ENCODE measurements at regions of chr11 and their contacts with region 1.

Region 1: GRCh38 chr11:78715639-78716311 is 141.1 kb upstream of the NARS2 start:
- DNase-seq: peak; percentile 85 to 88
- H3K4me3 ChIP-seq: no peak overlapping the region
- H3K4me3 Mint-ChIP-seq: no peak overlapping the region
- H3K27ac Mint-ChIP-seq: no peak overlapping the region
- H3K4me1 ChIP-seq: no peaks in the 10 kb centered on the region
- H3K4me1 Mint-ChIP-seq: no peaks in the 10 kb centered on the region
- H3K27me3 ChIP-seq: no peaks in the 10 kb centered on the region; the same call in 1 of the 2 replicates
- H3K27me3 Mint-ChIP-seq: peaks cover 16% of the 10 kb centered on the region
- CTCF ChIP-seq: peak; percentile 98 to 99

Region 2: DNA sequence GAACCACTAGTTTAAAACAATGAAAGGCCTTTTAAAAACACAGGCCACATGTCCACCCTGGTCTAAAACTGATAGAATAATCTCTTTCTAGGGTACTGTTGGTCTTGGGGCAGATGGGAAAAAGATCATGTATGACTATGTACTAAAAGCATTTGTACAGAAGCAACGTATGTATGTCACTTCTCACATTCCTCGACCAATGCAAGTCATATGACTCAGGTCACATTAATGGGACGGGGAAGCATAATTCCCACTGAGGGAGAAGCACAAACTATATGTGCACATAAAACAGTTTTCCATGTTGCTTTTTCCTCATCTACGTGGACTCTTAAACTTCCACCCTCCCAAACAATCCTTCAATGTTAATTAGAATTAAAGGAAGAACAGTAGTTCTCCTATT is 265.9 kb before region 1 on chr11:
- CTCF ChIA-PET with region 1: no interaction called
- POLR2A ChIA-PET with region 1: no interaction called
- intact Hi-C with region 1: no loop called
- DNase-seq: no peak
- H3K4me3 ChIP-seq: no peak overlapping the region
- H3K4me3 Mint-ChIP-seq: no peak overlapping the region
- H3K27ac Mint-ChIP-seq: no peak overlapping the region
- H3K4me1 ChIP-seq: peaks cover 4% of the 10 kb centered on the region; the same call in 1 of the 2 replicates
- H3K4me1 Mint-ChIP-seq: peaks cover 11% of the 10 kb centered on the region
- H3K27me3 ChIP-seq: no peaks in the 10 kb centered on the region
- H3K27me3 Mint-ChIP-seq: no peaks in the 10 kb centered on the region
- CTCF ChIP-seq: no peak

Region 3: DNA sequence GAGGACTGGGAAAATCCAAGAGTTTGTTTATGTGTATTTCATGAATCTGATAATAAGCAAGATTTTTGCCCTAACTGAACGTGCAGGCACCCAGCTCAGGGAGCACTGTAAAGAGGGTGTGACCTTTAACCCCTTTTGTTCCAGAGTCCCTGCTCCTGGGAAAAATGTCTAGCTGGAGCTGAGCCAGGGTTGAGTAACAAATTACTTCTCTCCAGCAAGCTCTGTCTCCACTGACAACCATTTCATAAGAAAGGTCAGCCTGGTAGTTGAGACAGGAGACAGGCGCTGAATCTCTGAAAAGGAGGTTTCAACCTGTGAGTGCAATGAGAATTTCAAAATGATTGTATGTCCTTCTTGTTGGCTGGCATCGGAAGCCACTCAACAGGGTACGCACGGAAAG is 15.3 kb after region 1 on chr11:
- CTCF ChIA-PET with region 1: interaction called, 10 read pairs
- POLR2A ChIA-PET with region 1: no interaction called
- intact Hi-C with region 1: no loop called
- DNase-seq: no peak
- H3K4me3 ChIP-seq: no peak overlapping the region
- H3K4me3 Mint-ChIP-seq: no peak overlapping the region
- H3K27ac Mint-ChIP-seq: no peak overlapping the region
- H3K4me1 ChIP-seq: no peaks in the 10 kb centered on the region
- H3K4me1 Mint-ChIP-seq: no peaks in the 10 kb centered on the region
- H3K27me3 ChIP-seq: no peaks in the 10 kb centered on the region
- H3K27me3 Mint-ChIP-seq: peaks cover 4% of the 10 kb centered on the region
- CTCF ChIP-seq: no peak

Region 4: GRCh38 chr11:78812513-78813293 is 96.9 kb after region 1 on chr11:
- CTCF ChIA-PET with region 1: interaction called, 4 read pairs
- POLR2A ChIA-PET with region 1: no interaction called
- intact Hi-C with region 1: loop called (anchors 5 kb)
- DNase-seq: peak in 1 of 2 experiments; percentile 31
- H3K4me3 ChIP-seq: no peak overlapping the region
- H3K4me3 Mint-ChIP-seq: no peak overlapping the region
- H3K27ac Mint-ChIP-seq: peak overlapping the region; percentile 12
- H3K4me1 ChIP-seq: no peaks in the 10 kb centered on the region
- H3K4me1 Mint-ChIP-seq: peaks cover 7% of the 10 kb centered on the region
- H3K27me3 ChIP-seq: no peaks in the 10 kb centered on the region
- H3K27me3 Mint-ChIP-seq: no peaks in the 10 kb centered on the region
- CTCF ChIP-seq: peak in 1 of 2 experiments; percentile 25

Region 5: DNA sequence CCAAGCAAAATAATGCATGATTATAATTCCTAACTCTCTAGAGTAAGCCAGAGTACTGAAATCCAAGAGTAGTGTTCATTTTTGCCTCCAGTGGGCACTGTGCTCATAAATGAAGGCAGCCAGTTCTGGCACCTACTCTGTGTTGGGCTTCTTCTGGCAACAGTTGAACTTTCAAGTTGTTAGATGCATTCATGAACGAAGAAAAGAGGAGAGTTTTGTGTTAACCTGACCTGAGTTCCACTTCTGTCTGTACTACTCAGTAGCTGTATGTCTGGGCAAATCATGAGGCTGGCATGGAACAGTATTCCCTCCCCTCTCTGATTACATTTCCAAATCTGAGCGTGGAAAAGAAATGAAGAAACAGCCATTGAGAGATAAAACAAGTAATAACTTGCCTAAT is 745.4 kb after region 1 on chr11:
- CTCF ChIA-PET with region 1: no interaction called
- POLR2A ChIA-PET with region 1: no interaction called
- intact Hi-C with region 1: no loop called
- DNase-seq: peak in 1 of 2 experiments; percentile 50
- H3K4me3 ChIP-seq: no peak overlapping the region
- H3K4me3 Mint-ChIP-seq: no peak overlapping the region
- H3K27ac Mint-ChIP-seq: no peak overlapping the region
- H3K4me1 ChIP-seq: no peaks in the 10 kb centered on the region
- H3K4me1 Mint-ChIP-seq: no peaks in the 10 kb centered on the region
- H3K27me3 ChIP-seq: no peaks in the 10 kb centered on the region
- H3K27me3 Mint-ChIP-seq: peaks cover 22% of the 10 kb centered on the region
- CTCF ChIP-seq: peak; percentile 68 to 86